ENCODE measurements at regions of chr4 and their contacts with region 1.

Region 1: DNA sequence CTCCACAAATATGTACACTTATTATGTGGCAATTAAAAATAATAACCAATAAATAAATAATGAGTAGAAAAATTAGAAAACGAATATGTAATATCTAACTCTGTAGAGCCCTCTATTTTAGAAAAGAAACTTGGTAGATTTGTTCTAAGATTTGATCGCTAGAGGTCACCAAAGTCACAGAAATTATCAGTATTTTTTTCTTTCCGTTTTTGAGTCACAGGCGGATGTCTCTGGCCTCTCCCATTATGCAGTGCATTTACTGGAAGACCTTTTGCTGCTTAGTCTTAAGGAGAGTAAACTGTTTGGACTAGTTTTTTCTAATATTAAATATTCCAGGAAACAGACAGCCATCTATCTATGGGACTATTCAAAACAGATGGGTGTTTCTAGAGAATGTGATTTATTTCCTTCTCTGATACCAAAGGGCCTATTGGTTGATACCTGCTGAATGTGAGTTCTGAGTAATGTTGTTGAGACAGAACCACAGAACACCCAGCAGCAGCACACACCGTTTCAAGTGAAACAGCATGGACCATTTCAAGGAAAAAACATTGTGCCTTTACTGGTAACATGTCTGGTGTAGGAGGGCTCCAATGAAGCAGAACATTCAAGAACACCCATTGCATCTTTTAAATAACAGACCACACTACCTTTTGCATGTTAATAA is 34.0 kb upstream of the GYPA start:
- DNase-seq: no peak

Region 2: DNA sequence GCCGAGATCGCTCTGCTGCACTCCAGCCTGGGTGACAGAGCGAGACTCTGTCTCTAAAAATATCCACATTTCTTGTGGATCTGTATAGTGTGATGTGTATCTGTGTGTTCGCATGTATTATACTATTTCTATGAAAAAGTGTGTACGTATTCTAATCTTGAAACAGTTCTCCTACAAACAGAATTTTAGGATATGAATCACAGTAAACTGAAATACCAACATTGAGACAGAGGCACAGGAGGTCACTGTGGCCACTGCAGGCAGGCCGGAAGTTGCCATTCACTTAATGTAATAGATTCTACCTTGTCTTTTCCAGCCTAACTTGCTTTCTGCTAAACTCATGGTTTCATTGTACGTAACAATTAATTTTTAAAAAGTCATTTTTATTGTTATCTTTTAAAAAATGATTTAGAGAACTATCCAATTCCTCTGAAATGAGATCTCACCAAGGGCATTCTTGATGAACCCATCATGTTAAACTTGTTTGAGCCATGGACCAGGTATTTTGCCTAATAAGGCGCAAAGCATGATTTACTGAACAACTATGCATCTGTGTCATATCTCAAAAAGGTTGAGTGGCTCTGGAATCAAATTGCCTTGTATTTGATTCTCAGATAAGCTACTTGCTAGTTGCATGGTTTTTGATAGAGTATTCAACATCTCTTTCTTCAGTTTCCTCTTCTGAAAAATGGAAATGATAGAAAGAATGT is 120.9 kb after region 1 on chr4:
- intact Hi-C with region 1: no loop called
- DNase-seq: no peak

Region 3: GRCh38 chr4:144355809-144356757 is 181.5 kb after region 1 on chr4:
- intact Hi-C with region 1: no loop called
- DNase-seq: no peak

Region 4: DNA sequence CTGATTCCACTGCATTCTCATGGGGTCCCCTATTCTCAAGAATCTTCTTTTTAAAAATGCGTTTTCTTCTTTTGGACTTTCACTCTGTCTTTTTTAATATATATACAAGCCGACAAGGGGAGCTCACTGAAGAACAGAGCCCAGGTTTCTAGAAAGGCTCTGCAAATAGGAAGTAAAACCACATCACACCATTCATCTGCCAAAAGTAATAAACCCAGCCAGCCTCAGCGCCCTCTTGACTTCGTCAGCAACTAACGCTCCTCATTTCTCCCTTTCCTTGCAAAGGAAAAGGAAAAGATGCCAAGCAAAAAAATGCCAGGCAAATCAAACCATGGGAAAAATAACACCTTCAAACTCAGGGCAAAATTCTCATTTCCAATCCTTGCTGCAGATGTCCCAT is 607.8 kb after region 1 on chr4:
- intact Hi-C with region 1: loop called (anchors 5 kb)
- DNase-seq: no peak

Region 5: GRCh38 chr4:145097821-145098674 is 923.5 kb after region 1 on chr4 and contains the starts of genes ABCE1 and ANAPC10:
- intact Hi-C with region 1: loop called (anchors 10 kb)
- DNase-seq: peak; percentile 94
- total RNA-seq, gene ABCE1: 39.5 TPM
- total RNA-seq, gene ANAPC10: 20.8 TPM